ENCODE measurements at regions of chr6 and their contacts with region 1.

Region 1: DNA sequence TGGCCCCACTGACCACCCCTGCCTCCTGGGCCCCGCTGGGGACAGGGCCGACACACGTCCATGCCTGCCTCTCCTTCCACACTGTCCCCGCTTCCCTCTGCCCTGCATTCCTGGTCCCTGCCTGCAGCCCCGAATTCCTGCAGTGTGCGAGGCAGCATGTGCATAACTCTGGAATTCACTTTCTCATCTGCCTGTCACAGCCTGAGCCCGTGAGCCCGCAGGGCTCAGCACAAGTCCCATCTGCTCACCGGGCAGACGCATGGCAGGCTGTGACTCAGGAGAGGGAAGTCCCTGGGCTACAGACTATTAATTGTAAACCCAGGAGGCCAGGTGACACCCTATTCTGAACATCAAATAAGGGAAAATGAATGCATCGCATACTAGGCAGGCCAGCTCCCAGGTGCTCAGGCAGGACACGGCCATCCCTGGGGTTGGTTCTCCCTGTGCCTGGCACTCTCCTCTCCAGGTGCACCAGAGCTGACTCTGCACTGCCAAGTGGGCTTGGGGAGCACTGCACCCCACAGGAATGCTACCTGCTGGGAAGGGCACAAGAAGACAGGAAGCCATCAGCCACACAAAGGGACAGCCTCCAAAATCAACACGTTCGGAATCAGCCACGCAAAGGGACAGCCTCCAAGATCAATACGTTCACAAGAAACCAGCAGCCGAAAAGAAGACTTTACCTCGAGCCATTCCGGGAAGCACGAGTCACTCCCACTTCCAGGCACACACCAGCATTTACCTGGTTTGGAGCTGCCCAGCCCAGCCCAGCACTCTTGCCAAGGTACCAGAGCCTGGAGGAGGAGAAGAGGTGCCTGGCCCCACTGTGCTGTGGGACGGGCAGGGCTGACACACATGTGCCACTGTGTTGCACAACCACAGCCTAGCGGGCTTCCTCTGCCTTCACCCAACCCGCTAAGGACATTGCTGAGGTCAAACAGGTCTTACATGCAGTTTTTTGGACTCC is 65.9 kb downstream of the DLL1 start:
- DNase-seq: peak; percentile 34 to 67
- ATAC-seq: peak in 1 of 2 donors; percentile 47
- H3K4me3 ChIP-seq: no peak overlapping the region
- H3K27ac ChIP-seq: peak overlapping the region in 3 of 4 donors; percentile 51 to 73 (median 67)
- H3K4me1 ChIP-seq: peaks cover 13 to 31% of the 10 kb centered on the region in 2 donors
- H3K27me3 ChIP-seq: no peaks in the 10 kb centered on the region
- CTCF ChIP-seq: no peak
- POLR2A ChIP-seq: no peak

Region 2: GRCh38 chr6:170129691-170130171 is 95.2 kb before region 1 on chr6:
- in situ Hi-C with region 1: no loop called
- intact Hi-C with region 1: loop called (anchors 5 kb)
- DNase-seq: peak; percentile 53 to 73
- ATAC-seq: peak; percentile 60 to 64
- H3K4me3 ChIP-seq: no peak overlapping the region
- H3K27ac ChIP-seq: peak overlapping the region; percentile 38 to 73 (median 51)
- H3K4me1 ChIP-seq: peaks cover 30 to 33% of the 10 kb centered on the region in 2 donors
- H3K27me3 ChIP-seq: no peaks in the 10 kb centered on the region
- CTCF ChIP-seq: no peak
- POLR2A ChIP-seq: no peak

Region 3: DNA sequence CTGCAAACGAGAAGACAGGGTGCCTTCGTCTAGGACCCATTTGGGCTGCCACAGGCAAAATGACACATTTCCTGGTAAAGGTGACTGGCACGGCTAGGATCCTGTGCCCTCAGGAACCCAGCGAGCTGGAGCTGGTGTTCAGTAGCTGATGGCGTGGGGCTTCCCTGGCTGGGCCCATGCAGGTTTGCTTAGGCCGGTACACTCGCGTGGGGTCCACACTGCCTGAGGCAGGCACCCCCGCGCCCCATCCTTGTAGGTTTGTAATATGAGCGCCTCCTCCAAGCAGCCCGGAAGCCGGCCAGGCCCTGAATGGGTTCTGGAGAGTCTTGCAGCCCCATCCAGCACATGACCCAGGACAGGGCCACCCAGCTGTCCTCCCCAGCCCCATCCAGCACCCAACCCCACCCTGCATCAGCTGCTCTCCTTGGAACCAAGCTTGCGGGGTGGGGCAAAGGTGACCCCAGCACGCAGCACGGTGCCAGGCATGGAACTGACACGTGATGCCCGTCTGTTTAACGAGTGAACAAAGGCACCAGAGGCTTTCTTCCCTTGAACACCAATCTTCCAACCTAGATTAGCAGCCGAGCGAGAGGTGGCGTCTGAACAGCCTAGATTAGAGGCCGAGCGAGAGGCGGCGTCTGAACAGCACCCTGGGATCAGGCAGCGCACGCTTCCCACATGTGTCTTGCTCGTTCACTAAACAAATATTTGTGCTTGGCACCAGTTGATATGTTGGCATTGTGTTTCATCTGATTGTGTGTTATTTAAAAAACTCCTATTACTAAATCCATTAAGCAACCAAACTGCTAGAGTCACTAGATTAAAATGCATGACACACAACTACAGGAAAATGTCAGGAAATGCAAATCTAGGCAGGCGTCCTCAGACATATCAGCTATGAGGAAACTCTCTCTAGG is 46.2 kb before region 1 on chr6:
- in situ Hi-C with region 1: no loop called
- intact Hi-C with region 1: loop called (anchors 5 kb)
- DNase-seq: peak; percentile 75 to 82
- ATAC-seq: peak; percentile 67 to 81
- H3K4me3 ChIP-seq: no peak overlapping the region
- H3K27ac ChIP-seq: peak overlapping the region; percentile 28 to 77 (median 60)
- H3K4me1 ChIP-seq: peaks cover 23 to 26% of the 10 kb centered on the region in 2 donors
- H3K27me3 ChIP-seq: no peaks in the 10 kb centered on the region
- CTCF ChIP-seq: no peak
- POLR2A ChIP-seq: no peak

Measured in gastrocnemius medialis (tissue), 4 donors.